MCF 10A (cell line): ENCODE measurements at regions of chr16 and their contacts with region 1.

Region 1: DNA sequence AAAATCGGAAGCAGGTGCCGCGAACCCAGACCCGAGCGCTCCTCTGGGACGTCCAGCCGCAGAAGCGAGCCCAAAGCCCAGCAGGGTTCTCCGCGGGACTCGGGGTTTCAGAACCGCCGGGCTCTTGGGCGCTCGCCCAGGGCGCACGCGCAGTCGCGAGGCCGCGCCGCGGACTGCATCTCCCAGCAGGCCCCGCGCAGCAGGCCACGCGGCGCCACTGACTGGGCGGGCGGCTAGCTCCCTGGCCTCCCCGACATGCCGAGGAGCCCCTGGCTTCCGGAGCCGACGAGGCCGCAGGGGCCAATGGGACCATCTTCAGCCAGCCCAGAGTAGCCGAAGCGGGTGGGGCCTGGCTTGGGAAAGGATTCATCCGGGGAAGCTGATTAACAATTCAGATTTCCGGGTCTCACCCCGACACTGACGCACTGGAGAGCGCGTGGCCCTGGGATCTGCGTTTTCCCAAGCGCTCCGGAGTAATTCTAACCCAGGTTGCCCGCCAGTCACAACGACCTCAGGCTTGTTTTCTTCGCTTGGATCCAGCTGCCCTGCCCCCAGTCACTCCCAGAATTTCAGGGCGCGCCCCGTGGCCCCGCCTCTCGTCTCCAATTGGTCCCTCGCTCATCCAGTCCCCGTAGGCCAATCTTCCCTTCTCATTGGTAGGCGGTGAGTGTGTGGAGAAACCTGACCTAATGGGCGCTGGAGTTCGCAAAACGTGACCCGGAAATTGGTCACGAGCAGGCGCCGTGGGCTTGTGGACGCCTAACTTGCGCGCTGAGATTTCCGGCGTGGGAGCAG is at the start of gene ZNF263:
- DNase-seq: peak; percentile 99
- H3K4me3 Mint-ChIP-seq: peak within 1 kb of the TSS; percentile 96
- H3K27ac Mint-ChIP-seq: peak within 1 kb of the TSS; percentile 99
- H3K4me1 Mint-ChIP-seq: no peaks in the 10 kb centered on the region
- H3K27me3 Mint-ChIP-seq: no peaks in the 10 kb centered on the region
- CTCF ChIP-seq: no peak
- total RNA-seq, gene ZNF263: 28.3 and 30.9 TPM in 2 replicates

Region 2: DNA sequence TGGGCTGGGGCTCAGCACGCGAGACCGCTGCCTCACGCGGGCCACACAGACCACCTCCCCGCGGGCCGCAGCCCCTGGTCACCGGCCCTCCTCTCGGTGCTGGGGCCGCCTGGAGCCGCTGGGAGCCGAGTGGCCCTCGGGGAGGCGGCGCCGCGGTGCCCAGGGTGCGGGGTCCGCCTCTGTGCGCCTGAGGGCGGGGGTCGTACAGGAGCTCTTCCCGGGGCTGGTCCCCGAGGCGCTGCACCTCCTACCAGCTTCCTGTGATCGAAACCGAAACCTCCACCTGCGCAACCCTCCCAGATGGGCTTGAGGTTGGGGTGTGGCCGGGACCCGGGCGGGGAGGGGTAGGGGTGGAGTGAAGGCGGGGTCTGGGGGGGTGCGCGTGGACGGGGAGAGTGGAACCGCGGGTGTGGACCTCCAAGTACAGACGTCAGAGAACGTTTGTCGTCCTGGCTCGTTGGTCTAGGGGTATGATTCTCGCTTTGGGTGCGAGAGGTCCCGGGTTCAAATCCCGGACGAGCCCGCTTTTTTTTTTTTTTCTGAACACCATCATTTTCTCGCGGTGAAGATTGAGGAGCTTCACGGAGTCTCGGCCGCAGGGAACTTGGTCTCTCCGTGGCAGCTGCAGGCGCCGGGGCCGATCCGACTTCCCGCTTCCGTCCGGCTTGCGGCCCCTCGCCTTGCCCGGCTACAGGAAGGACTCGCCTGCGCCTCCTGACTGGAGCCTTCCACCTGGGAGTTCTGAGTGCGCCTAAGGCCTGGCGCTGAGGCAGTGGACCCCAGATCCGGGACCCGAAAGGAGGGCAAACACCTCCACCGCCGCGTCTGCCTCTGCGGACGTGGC is 124.2 kb before region 1 on chr16:
- CTCF ChIA-PET with region 1: no interaction called
- POLR2A ChIA-PET with region 1: interaction called, 10 read pairs
- intact Hi-C with region 1: no loop called
- DNase-seq: peak; percentile 95
- H3K4me3 Mint-ChIP-seq: peak overlapping the region; percentile 83
- H3K27ac Mint-ChIP-seq: peak overlapping the region; percentile 98
- H3K4me1 Mint-ChIP-seq: no peaks in the 10 kb centered on the region
- H3K27me3 Mint-ChIP-seq: no peaks in the 10 kb centered on the region
- CTCF ChIP-seq: no peak

Region 3: DNA sequence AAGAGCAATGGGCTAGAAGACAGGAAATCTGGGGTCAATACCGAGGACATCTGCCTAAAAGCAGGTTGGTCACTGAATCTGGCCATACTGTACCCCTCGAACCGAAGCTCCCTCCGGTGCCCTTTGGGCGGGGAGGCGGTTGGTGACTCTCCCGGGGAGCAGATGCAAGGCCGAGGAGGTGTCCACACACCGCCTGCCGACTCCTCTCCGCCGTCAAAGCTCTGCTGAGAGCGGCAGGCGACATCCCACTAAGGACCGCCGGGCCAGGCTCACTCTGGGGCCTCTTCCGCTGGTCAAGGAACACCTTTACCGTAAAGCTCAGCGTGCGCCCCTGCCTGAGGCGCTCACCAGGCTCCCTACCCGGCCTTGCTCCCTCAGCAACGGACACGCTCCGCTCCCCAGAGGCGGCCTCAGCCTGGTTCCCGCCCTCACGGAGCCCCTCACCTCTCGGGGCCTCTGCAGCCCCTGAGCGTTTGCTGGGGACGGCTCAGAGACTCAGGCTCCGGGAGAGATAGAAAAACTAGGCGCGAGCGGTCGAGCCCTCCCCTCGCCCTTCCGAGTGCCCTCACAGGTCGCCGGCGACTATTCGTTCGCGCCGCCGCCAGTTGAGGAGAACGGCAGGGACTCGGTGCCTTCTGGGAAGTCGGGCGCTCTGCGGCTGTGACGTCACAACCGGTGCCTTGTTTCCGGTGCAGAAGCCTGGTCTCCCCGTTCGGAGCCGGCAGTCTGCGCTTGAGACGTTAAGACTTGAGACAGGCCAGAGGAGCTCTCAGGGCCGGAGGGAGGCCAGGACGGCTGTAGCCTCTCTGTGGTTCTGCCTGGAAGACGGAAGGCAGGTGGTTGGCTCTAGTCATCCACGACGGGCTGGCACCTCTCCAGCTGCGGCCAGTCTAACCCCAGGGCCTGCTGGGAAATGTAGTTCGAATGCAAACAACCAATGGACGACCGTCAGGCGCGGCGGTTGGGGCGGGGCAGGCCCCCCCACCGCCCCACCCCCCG is 48.1 kb before region 1 on chr16 and contains the start of gene ZNF200:
- CTCF ChIA-PET with region 1: no interaction called
- POLR2A ChIA-PET with region 1: interaction called, 17 read pairs
- intact Hi-C with region 1: loop called (anchors 1 kb)
- DNase-seq: peak; percentile 95
- H3K4me3 Mint-ChIP-seq: peak within 1 kb of the TSS; percentile 95
- H3K27ac Mint-ChIP-seq: peak within 1 kb of the TSS; percentile 96
- H3K4me1 Mint-ChIP-seq: peaks cover 4% of the 10 kb centered on the region
- H3K27me3 Mint-ChIP-seq: no peaks in the 10 kb centered on the region
- CTCF ChIP-seq: no peak
- total RNA-seq, gene ZNF200: 6.6 and 8.8 TPM in 2 replicates

Region 4: DNA sequence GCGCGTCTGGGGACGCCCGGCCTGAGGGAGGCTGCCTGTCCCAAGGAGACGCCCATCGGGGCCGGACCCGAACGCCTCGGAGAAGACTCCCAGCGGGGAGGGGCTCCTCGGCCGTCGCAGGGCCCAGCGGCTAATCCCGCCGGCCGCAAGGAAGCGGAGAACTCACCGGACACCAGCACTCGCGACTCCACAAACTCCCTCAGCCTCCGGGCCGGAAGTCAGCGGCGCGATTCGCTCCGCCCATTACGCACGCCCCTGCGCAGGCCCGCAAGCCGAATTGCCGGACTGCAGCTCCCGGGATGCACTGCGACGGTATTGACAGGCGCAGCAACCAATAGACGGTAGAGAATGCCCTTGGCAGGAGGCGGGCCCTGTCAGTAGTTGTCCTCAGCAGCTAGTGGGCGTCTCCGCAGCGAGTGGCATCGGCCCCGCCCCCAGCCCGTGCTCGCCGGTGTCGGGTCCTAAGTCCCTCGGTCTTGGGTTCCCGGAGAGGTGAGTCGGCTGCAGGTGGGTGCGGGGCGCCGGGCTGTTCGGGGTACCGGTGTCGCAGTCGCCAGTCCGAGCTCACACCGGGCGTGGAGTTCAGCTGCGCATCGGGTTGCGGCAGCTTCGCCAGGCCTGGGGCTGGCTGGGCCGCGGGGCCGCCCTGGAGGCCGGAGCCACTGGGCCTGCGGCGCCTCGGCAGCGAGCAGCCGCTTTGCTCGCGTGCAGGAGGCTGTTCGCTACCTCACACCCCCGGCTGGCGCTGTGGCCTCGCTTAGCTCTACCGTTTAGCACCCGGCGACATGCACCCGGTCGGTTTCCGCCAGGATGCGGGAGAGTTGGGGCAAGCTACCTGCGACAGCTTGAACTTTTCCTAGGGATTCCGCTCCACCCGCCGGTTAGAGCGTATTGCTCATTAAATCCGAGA is 118.1 kb after region 1 on chr16 and contains the starts of genes ZNF174 and ZSCAN32:
- CTCF ChIA-PET with region 1: no interaction called
- POLR2A ChIA-PET with region 1: interaction called, 50 read pairs
- intact Hi-C with region 1: no loop called
- DNase-seq: peak; percentile 99
- H3K4me3 Mint-ChIP-seq: peak within 1 kb of the TSS; percentile 92
- H3K27ac Mint-ChIP-seq: peak within 1 kb of the TSS; percentile 91
- H3K4me1 Mint-ChIP-seq: peaks cover 11% of the 10 kb centered on the region
- H3K27me3 Mint-ChIP-seq: no peaks in the 10 kb centered on the region
- CTCF ChIP-seq: no peak
- total RNA-seq, gene ZNF174: 7.5 and 8.9 TPM in 2 replicates
- total RNA-seq, gene ZSCAN32: 17.5 and 18.1 TPM in 2 replicates

Region 5: GRCh38 chr16:3457434-3458252 is 174.7 kb after region 1 on chr16:
- CTCF ChIA-PET with region 1: no interaction called
- POLR2A ChIA-PET with region 1: interaction called, 13 read pairs
- intact Hi-C with region 1: no loop called
- DNase-seq: peak; percentile 87
- H3K4me3 Mint-ChIP-seq: peak overlapping the region; percentile 84
- H3K27ac Mint-ChIP-seq: peak overlapping the region; percentile 75
- H3K4me1 Mint-ChIP-seq: peaks cover 31% of the 10 kb centered on the region
- H3K27me3 Mint-ChIP-seq: no peaks in the 10 kb centered on the region
- CTCF ChIP-seq: peak; percentile 34